ENCODE measurements at regions of chr10 and their contacts with region 1.

Region 1: DNA sequence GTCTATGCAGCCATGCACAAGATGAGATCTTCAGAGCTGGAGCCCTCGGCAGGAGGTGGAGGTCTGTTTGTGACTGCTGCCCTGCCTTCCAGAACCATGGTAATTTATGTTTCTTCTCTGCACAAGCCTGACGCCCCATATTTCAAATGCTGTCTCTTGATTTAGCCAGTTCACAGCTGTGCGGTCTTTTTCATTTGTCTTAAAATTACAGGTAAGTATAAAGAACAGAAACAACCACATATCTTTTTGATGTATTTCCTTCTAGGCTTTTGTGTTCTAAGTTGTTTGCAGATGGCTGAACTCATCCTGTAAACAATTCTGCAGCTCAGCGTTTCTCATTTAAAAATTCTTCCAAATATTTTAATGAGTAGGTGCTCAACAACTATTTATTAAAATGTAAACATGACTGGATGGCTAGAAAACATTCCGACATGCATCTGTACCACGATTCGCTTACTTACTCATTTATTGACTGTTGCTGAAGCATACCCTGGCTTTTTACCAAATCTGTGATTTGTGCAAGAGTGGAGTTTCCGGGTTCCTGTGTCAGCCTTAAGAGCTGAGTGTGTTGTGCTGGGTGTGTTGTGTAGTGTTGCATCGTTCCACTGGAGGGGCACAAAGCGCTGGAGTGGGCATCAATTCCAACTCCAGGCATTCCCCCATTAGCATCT is 58.9 kb downstream of the PIP4K2A start:
- DNase-seq: peak in 9 of 10 donors; percentile 35 to 90 (median 75)
- ATAC-seq: peak; percentile 83 to 85
- H3K4me3 Mint-ChIP-seq: peak overlapping the region; percentile 63 to 84 (median 80)
- H3K27ac Mint-ChIP-seq: peak overlapping the region; percentile 92 to 98 (median 96)
- H3K4me1 Mint-ChIP-seq: peaks cover 48 to 99% (median 96%) of the 10 kb centered on the region in 4 donors
- H3K27me3 Mint-ChIP-seq: no peaks in the 10 kb centered on the region

Region 2: GRCh38 chr10:22615819-22616499 is 39.5 kb before region 1 on chr10:
- POLR2A ChIA-PET with region 1: interaction called, 24 read pairs
- DNase-seq: no peak
- ATAC-seq: no peak
- H3K4me3 Mint-ChIP-seq: peak overlapping the region; percentile 16 to 73 (median 62)
- H3K27ac Mint-ChIP-seq: peak overlapping the region; percentile 73 to 97 (median 83)
- H3K4me1 Mint-ChIP-seq: peaks cover 56 to 98% (median 94%) of the 10 kb centered on the region in 4 donors
- H3K27me3 Mint-ChIP-seq: no peaks in the 10 kb centered on the region

Region 3: GRCh38 chr10:22666287-22667092 is 11.0 kb after region 1 on chr10:
- POLR2A ChIA-PET with region 1: interaction called, 98 read pairs
- DNase-seq: peak; percentile 16 to 91 (median 76)
- ATAC-seq: peak; percentile 86 to 91
- H3K4me3 Mint-ChIP-seq: peak overlapping the region; percentile 77 to 93 (median 88)
- H3K27ac Mint-ChIP-seq: peak overlapping the region; percentile 85 to 96 (median 90)
- H3K4me1 Mint-ChIP-seq: peaks cover 38 to 93% (median 79%) of the 10 kb centered on the region in 4 donors
- H3K27me3 Mint-ChIP-seq: no peaks in the 10 kb centered on the region

Region 4: DNA sequence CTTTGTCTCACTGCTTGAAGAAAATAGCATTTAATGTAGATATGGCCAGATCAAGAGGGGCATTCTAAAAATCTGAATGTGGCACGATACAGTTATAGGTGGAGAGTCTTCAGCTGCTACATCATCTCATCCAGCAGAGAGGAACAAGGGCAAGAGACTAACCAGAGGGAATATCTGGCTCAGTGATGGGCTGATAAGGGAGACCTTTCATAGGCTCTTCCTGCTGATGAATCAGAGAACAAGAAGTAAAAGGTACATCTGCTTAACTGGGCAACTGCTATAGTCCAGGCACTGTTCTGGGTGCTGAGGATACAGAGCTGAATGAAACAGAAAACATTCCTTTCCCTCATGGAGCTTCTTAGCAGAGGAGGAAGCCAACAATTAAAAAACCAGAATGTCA is 21.0 kb after region 1 on chr10:
- POLR2A ChIA-PET with region 1: interaction called, 98 read pairs
- DNase-seq: no peak
- ATAC-seq: peak in 1 of 2 donors; percentile 14
- H3K4me3 Mint-ChIP-seq: peak overlapping the region in 9 of 10 donors; percentile 2 to 80 (median 71)
- H3K27ac Mint-ChIP-seq: peak overlapping the region; percentile 77 to 97 (median 91)
- H3K4me1 Mint-ChIP-seq: peaks cover 46 to 92% (median 90%) of the 10 kb centered on the region in 4 donors
- H3K27me3 Mint-ChIP-seq: no peaks in the 10 kb centered on the region

Region 5: GRCh38 chr10:22682237-22683139 is 27.0 kb after region 1 on chr10:
- POLR2A ChIA-PET with region 1: interaction called, 24 read pairs
- DNase-seq: peak; percentile 20 to 85 (median 70)
- ATAC-seq: peak; percentile 66 to 76
- H3K4me3 Mint-ChIP-seq: peak overlapping the region; percentile 59 to 90 (median 80)
- H3K27ac Mint-ChIP-seq: peak overlapping the region; percentile 93 to 99 (median 97)
- H3K4me1 Mint-ChIP-seq: peaks cover 48 to 92% (median 86%) of the 10 kb centered on the region in 4 donors
- H3K27me3 Mint-ChIP-seq: no peaks in the 10 kb centered on the region